ENCODE measurements at regions of chr7 and their contacts with region 1.

Region 1: GRCh38 chr7:23013715-23014649 is at the start of gene HYCC1:
- DNase-seq: peak; percentile 99 to 100 (median 100)

Region 2: GRCh38 chr7:22640269-22640668 is 373.7 kb before region 1 on chr7:
- intact Hi-C with region 1: no loop called
- DNase-seq: no peak

Region 3: GRCh38 chr7:22811746-22812280 is 202.2 kb before region 1 on chr7:
- intact Hi-C with region 1: no loop called
- DNase-seq: no peak

Region 4: GRCh38 chr7:22822486-22823141 is 191.4 kb before region 1 on chr7 and contains the start of gene TOMM7:
- intact Hi-C with region 1: loop called (anchors 5 kb)
- DNase-seq: peak; percentile 82 to 98 (median 88)

Region 5: GRCh38 chr7:22854158-22855048 is 159.6 kb before region 1 on chr7:
- intact Hi-C with region 1: loop called (anchors 10 kb)
- DNase-seq: peak in 8 of 10 donors; percentile 37 to 90 (median 54)

Region 6: DNA sequence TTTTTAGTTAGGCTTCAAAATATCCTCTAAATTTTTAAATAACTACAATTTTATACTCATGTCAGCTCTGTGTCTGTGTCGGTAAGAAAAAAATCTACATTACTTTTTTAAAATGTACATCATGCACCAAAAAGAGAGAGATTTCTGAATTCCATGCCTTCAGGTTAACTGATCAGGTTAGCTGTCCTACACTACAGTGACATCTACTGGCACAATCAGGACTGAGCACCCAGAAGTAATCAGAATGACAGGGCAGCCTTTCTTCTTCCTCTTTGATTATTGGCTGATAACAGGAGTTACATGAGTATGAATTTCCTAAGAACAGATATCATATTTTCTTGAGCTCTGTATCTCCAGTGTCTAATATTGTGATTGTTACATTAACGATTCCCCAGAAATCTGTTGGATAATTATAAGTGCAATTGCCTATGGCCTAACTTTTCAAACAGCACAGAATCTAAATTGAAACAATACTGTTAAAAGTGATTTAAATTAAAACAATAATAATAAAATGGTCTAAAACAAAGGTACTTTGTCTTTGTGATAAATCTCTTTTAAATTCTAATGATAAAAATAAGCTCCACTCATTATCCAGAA is 41.7 kb after region 1 on chr7:
- intact Hi-C with region 1: loop called (anchors 5 kb)
- DNase-seq: peak in 4 of 10 donors; percentile 45 to 59 (median 52)

Region 7: DNA sequence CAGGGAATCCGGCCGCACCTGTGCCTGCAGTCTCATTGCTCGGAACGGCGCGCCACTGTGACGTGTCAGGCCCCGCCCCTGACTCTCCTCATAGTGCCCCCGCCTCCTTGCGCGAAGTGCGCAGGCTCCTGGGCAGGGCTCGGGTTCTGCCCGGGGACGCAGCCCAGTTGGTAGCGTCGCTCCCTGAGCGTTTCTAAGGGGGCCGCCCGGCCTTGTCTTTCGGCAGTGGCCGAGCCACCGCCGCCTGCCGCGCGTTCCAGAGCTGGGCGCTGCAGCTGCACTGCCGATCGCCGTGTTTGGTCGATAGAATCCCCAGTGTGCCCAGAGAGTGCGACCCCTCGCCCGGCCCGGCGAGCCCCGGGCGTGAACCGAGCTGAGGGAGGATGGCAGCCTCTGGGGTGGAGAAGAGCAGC is 91.7 kb after region 1 on chr7 and contains the start of gene KLHL7:
- intact Hi-C with region 1: loop called (anchors 10 kb)
- DNase-seq: peak; percentile 94 to 99 (median 97)

Measured in posterior cingulate gyrus (tissue), 11 donors.